ENCODE measurements at regions of chr20 and their contacts with region 1.

Region 1: GRCh38 chr20:43691928-43692524 is 25.1 kb downstream of the MYBL2 start:
- DNase-seq: no peak
- ATAC-seq: peak; percentile 98
- H3K4me3 ChIP-seq: no peak overlapping the region
- H3K27ac ChIP-seq: no peak overlapping the region
- H3K4me1 ChIP-seq: no peaks in the 10 kb centered on the region
- H3K27me3 ChIP-seq: no peaks in the 10 kb centered on the region
- CTCF ChIP-seq: peak; percentile 74 to 79 (median 76)
- EP300 ChIP-seq: no peak
- POLR2A ChIP-seq: no peak
- RAD21 ChIP-seq: peak; percentile 88

Region 2: DNA sequence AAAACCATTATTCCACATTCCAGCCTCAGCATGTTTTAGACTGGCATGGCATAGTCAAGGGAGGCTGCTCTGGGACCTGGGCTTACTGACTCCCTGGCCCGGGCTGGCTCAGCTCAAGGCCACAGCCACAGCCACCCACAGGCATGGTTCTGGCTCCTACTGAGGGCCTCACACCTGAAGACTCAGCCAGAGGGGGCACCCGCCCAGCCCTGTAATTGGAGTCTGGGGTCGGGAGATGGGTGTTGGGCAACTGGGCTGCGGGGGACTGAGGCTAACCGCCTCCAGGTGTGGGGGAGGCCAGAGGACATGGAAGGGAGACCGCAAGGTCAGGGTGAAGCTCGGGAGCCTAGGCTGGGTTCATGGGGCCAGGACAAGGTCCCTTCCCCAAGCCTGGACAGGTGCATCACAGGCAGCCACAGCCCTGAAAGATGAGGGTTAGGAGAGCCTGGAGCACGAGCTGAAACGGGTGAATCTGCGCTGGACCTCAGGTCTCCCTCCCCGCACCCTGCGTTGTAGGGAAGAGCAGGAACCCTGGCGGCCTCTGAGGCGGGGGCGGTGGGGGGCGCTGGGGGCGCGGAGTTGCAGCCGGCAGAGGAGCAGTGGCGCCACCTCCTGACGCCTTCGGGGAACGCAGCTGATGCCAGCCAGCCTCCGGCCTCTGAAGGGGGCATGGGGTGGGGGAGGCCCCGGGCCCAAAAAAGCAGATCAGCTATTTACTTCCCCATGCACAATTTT is 302.0 kb before region 1 on chr20:
- CTCF ChIA-PET with region 1: no interaction called
- POLR2A ChIA-PET with region 1: no interaction called
- RAD21 ChIA-PET with region 1: no interaction called
- SMC1A ChIA-PET with region 1: no interaction called
- in situ Hi-C with region 1: no loop called
- intact Hi-C with region 1: no loop called
- DNase-seq: no peak
- ATAC-seq: no peak
- H3K4me3 ChIP-seq: no peak overlapping the region
- H3K27ac ChIP-seq: no peak overlapping the region
- H3K4me1 ChIP-seq: no peaks in the 10 kb centered on the region
- H3K27me3 ChIP-seq: no peaks in the 10 kb centered on the region
- CTCF ChIP-seq: peak in 1 of 3 experiments; percentile 16; a peak in 1 of 6 replicates
- EP300 ChIP-seq: no peak
- POLR2A ChIP-seq: no peak
- RAD21 ChIP-seq: no peak

Region 3: DNA sequence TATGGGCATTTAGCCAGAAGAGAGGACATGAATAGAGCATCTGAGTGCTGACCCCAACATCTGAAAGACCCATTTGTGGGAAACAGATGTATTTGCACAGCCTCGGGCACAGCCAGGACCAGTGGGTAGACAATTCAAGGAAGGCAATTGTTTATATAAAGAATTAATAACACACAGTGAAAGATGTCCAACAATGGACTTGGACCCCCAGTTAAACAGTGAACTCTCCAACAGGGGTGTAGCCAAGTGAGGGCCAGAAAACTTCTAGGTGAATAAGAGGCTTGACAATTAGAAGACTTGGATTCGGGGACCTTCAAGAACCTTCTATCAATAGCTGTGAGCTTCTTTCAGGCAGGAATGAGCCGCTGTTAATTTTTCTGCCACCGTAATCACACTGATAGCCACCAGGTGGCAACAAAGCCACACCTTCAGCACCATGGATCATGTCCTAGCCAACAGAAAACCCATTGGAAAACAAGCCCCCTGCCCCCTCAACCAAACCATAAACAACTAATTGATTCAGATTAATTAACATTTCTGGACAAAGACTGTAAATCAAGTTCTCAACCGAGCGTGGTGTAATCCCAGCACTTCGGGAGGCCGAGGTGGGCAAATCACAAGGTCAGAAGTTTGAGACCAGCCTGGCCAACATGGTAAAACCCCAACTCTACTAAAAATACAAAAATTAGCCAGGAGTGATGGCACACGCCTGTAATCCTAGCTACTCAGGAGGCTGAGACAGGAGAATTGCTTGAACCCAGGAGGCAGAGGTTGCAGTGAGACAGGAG is 243.1 kb before region 1 on chr20:
- CTCF ChIA-PET with region 1: interaction called, 38 read pairs
- POLR2A ChIA-PET with region 1: no interaction called
- RAD21 ChIA-PET with region 1: interaction called, 15 read pairs
- SMC1A ChIA-PET with region 1: interaction called, 15 read pairs
- in situ Hi-C with region 1: loop called (anchors 5 kb)
- intact Hi-C with region 1: loop called (anchors 5 kb)
- DNase-seq: peak; percentile 13
- ATAC-seq: peak; percentile 89
- H3K4me3 ChIP-seq: no peak overlapping the region
- H3K27ac ChIP-seq: no peak overlapping the region
- H3K4me1 ChIP-seq: no peaks in the 10 kb centered on the region
- H3K27me3 ChIP-seq: no peaks in the 10 kb centered on the region
- CTCF ChIP-seq: peak; percentile 74 to 87 (median 77)
- EP300 ChIP-seq: no peak
- POLR2A ChIP-seq: no peak
- RAD21 ChIP-seq: peak; percentile 90

Region 4: GRCh38 chr20:43563429-43563828 is 128.6 kb before region 1 on chr20:
- CTCF ChIA-PET with region 1: interaction called, 16 read pairs
- POLR2A ChIA-PET with region 1: no interaction called
- RAD21 ChIA-PET with region 1: interaction called, 4 read pairs
- SMC1A ChIA-PET with region 1: no interaction called
- in situ Hi-C with region 1: no loop called
- intact Hi-C with region 1: no loop called
- DNase-seq: no peak
- ATAC-seq: peak; percentile 61
- H3K4me3 ChIP-seq: no peak overlapping the region
- H3K27ac ChIP-seq: no peak overlapping the region
- H3K4me1 ChIP-seq: no peaks in the 10 kb centered on the region
- H3K27me3 ChIP-seq: no peaks in the 10 kb centered on the region
- CTCF ChIP-seq: peak in 2 of 3 experiments; percentile 21 to 24; a peak in 2 of 6 replicates
- EP300 ChIP-seq: no peak
- POLR2A ChIP-seq: no peak
- RAD21 ChIP-seq: peak; percentile 35; the same call in 1 of the 2 replicates

Region 5: DNA sequence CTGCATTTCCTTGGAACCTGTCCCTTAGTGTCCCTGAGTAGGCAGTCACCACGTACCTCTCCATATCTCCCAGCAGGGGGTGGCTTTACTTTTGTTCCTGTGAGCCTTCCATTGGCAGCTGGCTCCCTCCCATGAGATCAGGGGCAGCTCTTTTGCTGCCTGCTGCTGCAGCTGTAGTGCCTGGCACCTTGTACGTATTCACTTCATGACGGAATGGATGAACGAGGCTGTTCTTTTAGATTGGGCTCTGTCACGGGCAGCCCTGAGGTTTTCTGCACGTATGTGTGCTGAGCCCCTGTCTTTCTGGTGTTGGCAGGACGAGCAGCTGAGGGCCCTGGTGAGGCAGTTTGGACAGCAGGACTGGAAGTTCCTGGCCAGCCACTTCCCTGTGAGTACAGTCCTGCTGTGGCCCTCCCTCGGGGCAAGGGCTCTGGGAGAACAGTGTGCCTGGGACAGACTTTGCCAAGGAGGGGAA is 10.5 kb before region 1 on chr20:
- CTCF ChIA-PET with region 1: interaction called, 32 read pairs
- POLR2A ChIA-PET with region 1: interaction called, 5 read pairs
- RAD21 ChIA-PET with region 1: interaction called, 7 read pairs
- SMC1A ChIA-PET with region 1: interaction called, 10 read pairs
- in situ Hi-C with region 1: no loop called
- intact Hi-C with region 1: no loop called
- DNase-seq: peak; percentile 21
- ATAC-seq: peak; percentile 70
- H3K4me3 ChIP-seq: peak overlapping the region; percentile 68
- H3K27ac ChIP-seq: peak overlapping the region; percentile 89
- H3K4me1 ChIP-seq: peaks cover 32% of the 10 kb centered on the region
- H3K27me3 ChIP-seq: no peaks in the 10 kb centered on the region
- CTCF ChIP-seq: peak; percentile 21 to 42 (median 40); a peak in 5 of 6 replicates
- EP300 ChIP-seq: no peak
- POLR2A ChIP-seq: 0 out of 2 replicates have a peak, but pooled peaks have one; percentile 23
- RAD21 ChIP-seq: 0 out of 2 replicates have a peak, but pooled peaks have one; percentile 14

Region 6: GRCh38 chr20:44092551-44093248 is 400.7 kb after region 1 on chr20:
- CTCF ChIA-PET with region 1: interaction called, 34 read pairs
- POLR2A ChIA-PET with region 1: no interaction called
- RAD21 ChIA-PET with region 1: no interaction called
- SMC1A ChIA-PET with region 1: interaction called, 7 read pairs
- in situ Hi-C with region 1: no loop called
- intact Hi-C with region 1: no loop called
- DNase-seq: no peak
- ATAC-seq: peak; percentile 81
- H3K4me3 ChIP-seq: no peak overlapping the region
- H3K27ac ChIP-seq: no peak overlapping the region
- H3K4me1 ChIP-seq: peaks cover 8% of the 10 kb centered on the region
- H3K27me3 ChIP-seq: no peaks in the 10 kb centered on the region
- CTCF ChIP-seq: peak; percentile 49 to 58 (median 53)
- EP300 ChIP-seq: no peak
- POLR2A ChIP-seq: no peak
- RAD21 ChIP-seq: peak; percentile 59